ENCODE measurements at regions of chr19 and their contacts with region 1.

Region 1: DNA sequence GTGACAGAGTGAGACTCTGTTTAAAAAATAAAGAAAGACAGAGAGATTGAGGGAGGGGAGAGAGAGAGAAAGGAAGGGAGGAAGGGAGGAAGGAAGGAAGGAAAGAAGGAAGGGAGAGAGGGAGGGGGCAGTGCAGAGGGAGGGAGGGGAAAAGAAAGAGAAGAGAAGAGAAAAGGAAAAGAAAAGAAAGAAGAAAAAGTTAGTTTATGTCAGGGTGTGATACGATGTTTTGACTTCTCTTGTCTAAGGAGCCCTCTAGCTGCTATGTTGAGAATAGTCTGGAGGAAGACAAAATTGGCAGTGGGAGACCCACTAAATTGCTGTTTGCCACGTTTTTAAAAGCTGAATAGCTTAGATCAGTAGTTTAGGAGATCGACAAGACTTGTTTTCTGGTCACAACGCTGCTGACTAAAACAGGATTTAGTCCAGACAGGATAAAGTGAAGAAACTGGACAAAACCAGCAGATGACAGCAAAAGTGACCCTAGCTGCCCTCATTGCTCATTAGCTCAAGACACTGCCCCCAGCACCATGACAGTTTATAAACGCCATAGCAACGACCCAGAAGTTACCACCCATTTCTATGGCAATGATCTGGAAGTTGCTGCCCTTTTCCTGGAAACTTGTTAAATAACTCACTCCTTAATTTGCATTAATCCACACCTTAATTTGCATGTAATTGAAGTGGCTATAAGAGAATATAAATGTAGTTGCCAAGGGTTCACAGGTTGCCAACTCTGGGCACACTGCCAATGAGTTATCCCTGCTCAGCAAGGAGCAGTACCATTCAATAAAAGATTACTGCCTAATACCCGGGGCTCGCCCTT is 11.1 kb downstream of the TEX101 start:
- DNase-seq: no peak
- H3K4me3 ChIP-seq: no peak overlapping the region
- H3K27ac ChIP-seq: no peak overlapping the region
- H3K27me3 ChIP-seq: peaks cover 7% of the 10 kb centered on the region
- CTCF ChIP-seq: peak; percentile 71

Region 2: GRCh38 chr19:43316592-43317319 is 109.0 kb before region 1 on chr19:
- CTCF ChIA-PET with region 1: no interaction called
- POLR2A ChIA-PET with region 1: no interaction called
- DNase-seq: no peak
- H3K4me3 ChIP-seq: no peak overlapping the region
- H3K27ac ChIP-seq: no peak overlapping the region
- H3K27me3 ChIP-seq: no peaks in the 10 kb centered on the region
- CTCF ChIP-seq: peak; percentile 54

Region 3: GRCh38 chr19:43395561-43395960 is 30.2 kb before region 1 on chr19:
- CTCF ChIA-PET with region 1: interaction called, 11 read pairs
- POLR2A ChIA-PET with region 1: no interaction called
- DNase-seq: no peak
- H3K4me3 ChIP-seq: no peak overlapping the region
- H3K27ac ChIP-seq: no peak overlapping the region
- H3K27me3 ChIP-seq: peaks cover 2% of the 10 kb centered on the region
- CTCF ChIP-seq: no peak

Region 4: DNA sequence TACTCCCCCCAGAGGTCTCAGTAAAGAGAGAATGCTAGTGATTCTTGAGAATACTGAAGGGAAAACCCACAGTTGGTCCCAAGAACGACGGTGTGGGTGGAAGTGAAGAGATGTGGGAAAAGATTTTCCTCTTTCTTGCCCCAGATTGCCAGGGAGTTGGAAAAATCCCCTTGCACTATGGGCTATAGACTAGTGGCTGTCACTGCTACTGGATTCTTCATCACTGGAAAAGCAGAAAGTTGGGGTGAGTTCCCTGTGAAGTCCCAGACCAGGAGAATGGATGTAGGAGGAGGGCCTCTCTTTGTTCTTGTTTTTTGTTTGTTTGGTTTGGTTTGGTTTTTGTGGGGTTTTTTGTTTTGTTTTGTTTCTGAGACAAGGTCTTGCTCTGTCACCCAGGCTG is 28.3 kb after region 1 on chr19:
- CTCF ChIA-PET with region 1: no interaction called
- POLR2A ChIA-PET with region 1: no interaction called
- DNase-seq: no peak
- H3K4me3 ChIP-seq: no peak overlapping the region
- H3K27ac ChIP-seq: no peak overlapping the region
- H3K27me3 ChIP-seq: peaks cover 11% of the 10 kb centered on the region
- CTCF ChIP-seq: no peak

Measured in AG04450 (cell line).